Posterior vena cava (tissue), 2 donors: ENCODE measurements at regions of chr14 and their contacts with region 1.

Region 1: DNA sequence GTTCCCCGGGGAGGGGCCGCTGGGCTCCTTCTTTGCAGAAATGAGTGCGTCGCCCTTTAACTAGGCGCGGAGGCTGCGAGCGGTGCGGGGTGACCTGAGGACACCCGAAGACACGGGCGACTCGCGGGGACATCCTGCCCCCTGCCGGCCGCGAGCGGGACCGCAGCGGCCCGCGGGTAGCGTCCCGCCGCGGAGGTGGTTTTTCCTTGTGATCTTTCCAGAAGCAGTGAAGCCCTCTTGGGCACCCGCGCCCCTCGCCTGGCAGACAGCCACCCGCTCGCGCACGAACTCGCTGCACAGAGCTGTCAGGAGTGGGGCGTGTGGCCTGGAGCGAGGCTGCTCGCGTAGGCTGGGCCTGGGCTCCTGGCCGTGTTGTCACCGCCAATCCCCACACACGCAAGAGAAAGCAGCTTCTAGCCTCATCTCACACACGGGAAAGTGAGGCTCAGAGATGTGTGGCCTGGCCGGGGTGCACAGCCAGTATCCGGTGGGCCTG is 67.2 kb downstream of the DIO3 start:
- DNase-seq: peak; percentile 93

Region 2: GRCh38 chr14:100383727-100384158 is 1244.8 kb before region 1 on chr14:
- intact Hi-C with region 1: loop called in 1 of 2 experiments (anchors 5 kb)
- DNase-seq: peak; percentile 87

Region 3: GRCh38 chr14:100662879-100663760 is 965.4 kb before region 1 on chr14:
- intact Hi-C with region 1: loop called in 1 of 2 experiments (anchors 5 kb)
- DNase-seq: peak; percentile 91